Cardiac septum (tissue), 1 donor: ENCODE measurements at regions of chr12 and their contacts with region 1.

Region 1: DNA sequence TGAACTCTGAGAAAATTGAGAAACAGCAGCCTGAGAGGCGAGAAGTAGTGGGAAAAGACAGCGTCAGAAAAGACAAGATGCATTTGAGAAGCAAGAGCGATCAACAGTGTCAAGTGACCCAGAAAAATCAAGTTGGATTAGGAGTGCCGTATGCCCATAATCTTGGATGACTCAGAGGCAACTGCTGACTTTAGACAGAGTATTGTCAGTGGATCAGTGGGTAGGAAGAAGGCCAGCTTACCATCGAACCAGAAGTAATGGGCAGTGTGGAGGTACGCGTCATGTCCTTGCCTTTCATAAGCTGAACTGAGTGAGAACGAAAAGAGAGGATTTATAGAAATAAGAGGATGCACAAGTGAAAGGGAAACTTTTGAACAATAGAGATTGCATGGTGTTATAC is 151.0 kb upstream of the NAV3 start:
- DNase-seq: no peak

Region 2: DNA sequence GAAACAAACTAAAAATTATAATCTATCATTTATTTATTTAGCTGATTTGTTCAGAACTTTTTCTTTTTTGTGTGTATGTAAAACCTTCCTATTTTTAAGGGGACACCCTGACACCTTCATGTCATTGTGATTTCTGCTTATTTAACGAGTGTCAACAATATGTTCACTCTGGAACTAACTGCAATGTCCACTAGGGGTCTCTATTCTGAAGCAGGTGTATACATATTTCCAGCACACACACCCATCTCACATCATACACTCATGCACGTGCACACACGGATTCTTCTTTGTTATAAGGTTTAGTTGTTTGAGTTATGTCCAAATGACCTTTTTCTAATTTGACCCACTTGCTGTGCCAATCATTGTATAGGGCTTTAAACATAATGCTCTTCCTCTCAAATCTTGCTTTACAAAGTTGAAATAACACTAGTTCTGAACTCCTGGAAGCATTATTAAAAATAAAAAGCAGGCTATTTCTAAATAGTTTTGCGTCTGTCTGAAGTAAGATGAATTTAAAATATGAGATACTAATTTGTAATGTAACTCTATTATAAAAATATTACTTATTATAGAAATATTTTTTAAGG is 629.8 kb before region 1 on chr12:
- intact Hi-C with region 1: loop called (anchors 5 kb)
- DNase-seq: no peak

Region 3: DNA sequence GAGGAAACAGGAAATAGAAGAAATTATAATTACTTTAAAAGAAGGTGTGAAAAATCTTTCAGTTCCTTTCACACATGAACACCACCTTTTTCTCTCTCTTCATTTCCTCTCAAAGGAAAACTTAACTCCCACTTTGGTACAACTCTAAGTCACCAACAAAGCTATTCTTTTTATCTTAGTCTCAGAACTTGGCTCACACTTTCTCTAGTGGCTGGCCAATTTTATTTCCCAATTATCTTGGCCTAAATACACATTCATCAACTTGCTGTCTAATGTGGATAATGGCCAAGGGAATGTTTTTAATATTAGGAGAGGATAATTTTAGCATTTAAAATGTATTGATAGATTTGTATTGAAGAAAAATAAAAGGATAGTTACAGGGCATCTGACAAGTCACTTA is 86.5 kb after region 1 on chr12:
- intact Hi-C with region 1: no loop called
- DNase-seq: no peak